PC-9 (cell line): ENCODE measurements at regions of chr3 and their contacts with region 1.

Region 1: GRCh38 chr3:114608293-114608692 is 314.5 kb downstream of the TIGIT start:
- DNase-seq: peak in 1 of 2 experiments; percentile 79
- H3K4me3 ChIP-seq: no peak overlapping the region
- H3K27ac ChIP-seq: peak overlapping the region; percentile 74
- H3K4me1 ChIP-seq: peaks cover 21% of the 10 kb centered on the region
- H3K27me3 ChIP-seq: no peaks in the 10 kb centered on the region
- CTCF ChIP-seq: no peak

Region 2: GRCh38 chr3:114680299-114680698 is 72.0 kb after region 1 on chr3:
- CTCF ChIA-PET with region 1: no interaction called
- POLR2A ChIA-PET with region 1: interaction called, 11 read pairs
- intact Hi-C with region 1: no loop called
- DNase-seq: no peak
- H3K4me3 ChIP-seq: no peak overlapping the region
- H3K27ac ChIP-seq: no peak overlapping the region
- H3K4me1 ChIP-seq: no peaks in the 10 kb centered on the region
- H3K27me3 ChIP-seq: no peaks in the 10 kb centered on the region
- CTCF ChIP-seq: no peak